AG04450 (cell line): ENCODE measurements at regions of chr3 and their contacts with region 1.

Region 1: GRCh38 chr3:66836363-66837152 is 161.5 kb upstream of the KBTBD8 start:
- DNase-seq: no peak
- H3K4me3 ChIP-seq: no peak overlapping the region
- H3K27ac ChIP-seq: no peak overlapping the region
- H3K27me3 ChIP-seq: peaks cover 10% of the 10 kb centered on the region
- CTCF ChIP-seq: peak; percentile 35

Region 2: DNA sequence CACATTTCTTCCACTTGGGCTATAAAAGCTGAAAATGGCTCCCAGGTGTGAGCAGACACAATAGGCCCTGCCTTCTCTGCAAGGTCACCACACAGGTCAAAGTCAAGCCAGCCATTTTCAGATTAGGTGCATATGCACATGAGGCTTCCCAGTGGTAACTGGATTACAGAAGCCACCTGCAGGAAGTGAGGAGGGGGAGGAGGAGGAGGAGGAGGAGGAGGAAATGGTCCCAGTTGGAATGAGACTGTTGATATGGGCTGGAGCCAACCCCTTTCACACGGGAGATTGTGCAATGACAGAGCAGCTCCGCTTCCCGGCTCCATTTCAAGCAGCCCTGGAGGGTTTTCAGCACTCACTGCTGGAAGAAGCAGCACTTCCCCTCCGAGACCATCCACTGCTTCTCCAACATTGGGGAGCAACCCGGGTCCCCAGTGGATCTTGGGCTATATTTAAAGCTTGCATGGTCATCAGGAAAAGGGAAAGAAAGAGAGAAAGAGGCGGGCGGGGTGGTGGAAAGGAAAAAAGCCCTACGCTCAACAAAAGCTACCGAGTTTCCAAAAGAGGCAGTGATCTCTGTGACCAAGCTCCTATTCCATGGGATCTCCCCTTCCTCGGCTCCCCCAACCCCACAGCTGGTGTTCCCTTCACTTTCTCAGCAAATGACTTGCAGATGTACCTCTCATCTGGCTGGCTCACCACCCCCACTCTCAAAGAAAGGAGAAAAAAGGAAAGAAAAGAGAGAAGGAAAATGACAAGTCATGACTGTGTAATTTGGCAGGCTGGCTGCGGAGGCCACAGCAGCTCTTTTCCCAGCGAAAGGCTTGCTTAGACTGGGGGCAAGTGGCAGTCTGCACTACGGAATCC is 394.1 kb before region 1 on chr3:
- CTCF ChIA-PET with region 1: interaction called, 12 read pairs
- POLR2A ChIA-PET with region 1: no interaction called
- DNase-seq: peak; percentile 69
- H3K4me3 ChIP-seq: peak overlapping the region; percentile 13; the same call in 1 of the 2 replicates
- H3K27ac ChIP-seq: peak overlapping the region; percentile 92
- H3K27me3 ChIP-seq: no peaks in the 10 kb centered on the region
- CTCF ChIP-seq: 0 out of 2 replicates have a peak, but pooled peaks have one; percentile 24

Region 3: DNA sequence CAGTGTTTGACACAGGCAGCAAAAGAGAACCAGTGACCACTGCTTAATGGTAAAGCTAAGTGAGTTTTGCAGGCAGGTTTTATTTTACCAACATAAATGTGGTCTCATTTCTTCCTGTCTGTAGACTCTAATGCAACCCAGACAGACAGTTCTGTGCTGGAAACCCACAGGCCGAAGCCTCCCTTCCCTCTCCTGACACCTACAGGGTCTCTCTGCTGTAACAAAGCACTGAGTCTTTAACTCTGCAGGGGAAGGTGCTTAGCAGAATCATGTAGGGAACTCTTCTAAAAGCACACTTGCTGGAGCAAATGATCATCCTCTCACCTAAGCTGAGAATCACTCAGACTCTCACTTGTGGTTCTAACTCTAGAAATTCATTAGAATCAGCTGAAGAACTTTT is 361.8 kb after region 1 on chr3:
- CTCF ChIA-PET with region 1: no interaction called
- POLR2A ChIA-PET with region 1: no interaction called
- DNase-seq: no peak
- H3K4me3 ChIP-seq: no peak overlapping the region
- H3K27ac ChIP-seq: no peak overlapping the region
- H3K27me3 ChIP-seq: peaks cover 3% of the 10 kb centered on the region
- CTCF ChIP-seq: no peak